Breast epithelium (tissue), 4 donors: ENCODE measurements at regions of chr6 and their contacts with region 1.

Region 1: GRCh38 chr6:100968943-100969342 is 87.8 kb upstream of the ASCC3 start:
- DNase-seq: no peak
- H3K4me3 ChIP-seq: no peak overlapping the region
- H3K27ac ChIP-seq: no peak overlapping the region
- H3K4me1 ChIP-seq: no peaks in the 10 kb centered on the region
- H3K27me3 ChIP-seq: no peaks in the 10 kb centered on the region
- CTCF ChIP-seq: no peak
- POLR2A ChIP-seq: no peak

Region 2: GRCh38 chr6:100774681-100775080 is 194.3 kb before region 1 on chr6:
- intact Hi-C with region 1: loop called (anchors 5 kb)
- DNase-seq: no peak
- H3K4me3 ChIP-seq: no peak overlapping the region
- H3K27ac ChIP-seq: no peak overlapping the region
- H3K4me1 ChIP-seq: no peaks in the 10 kb centered on the region
- H3K27me3 ChIP-seq: no peaks in the 10 kb centered on the region
- CTCF ChIP-seq: no peak
- POLR2A ChIP-seq: no peak